Activated naive CD4-positive, alpha-beta T cell treated with anti-CD3 and anti-CD28 coated beads for 36 hours (primary cell): ENCODE measurements at regions of chr1 and their contacts with region 1.

Region 1: GRCh38 chr1:26787706-26788514 is at the start of gene PIGV:
- DNase-seq: peak; percentile 87
- H3K4me3 Mint-ChIP-seq: peak within 1 kb of the TSS; percentile 83
- H3K27ac Mint-ChIP-seq: peak within 1 kb of the TSS; percentile 97
- H3K4me1 Mint-ChIP-seq: peaks cover 58% of the 10 kb centered on the region
- H3K27me3 Mint-ChIP-seq: no peaks in the 10 kb centered on the region
- total RNA-seq, gene PIGV: 10.6 to 11.2 TPM

Region 2: GRCh38 chr1:26472901-26473845 is 314.7 kb before region 1 on chr1:
- CTCF ChIA-PET with region 1: no interaction called
- intact Hi-C with region 1: loop called (anchors 1 kb)
- DNase-seq: peak; percentile 96
- H3K4me3 Mint-ChIP-seq: peak overlapping the region; percentile 87
- H3K27ac Mint-ChIP-seq: peak overlapping the region; percentile 71
- H3K4me1 Mint-ChIP-seq: peaks cover 49% of the 10 kb centered on the region
- H3K27me3 Mint-ChIP-seq: no peaks in the 10 kb centered on the region

Region 3: DNA sequence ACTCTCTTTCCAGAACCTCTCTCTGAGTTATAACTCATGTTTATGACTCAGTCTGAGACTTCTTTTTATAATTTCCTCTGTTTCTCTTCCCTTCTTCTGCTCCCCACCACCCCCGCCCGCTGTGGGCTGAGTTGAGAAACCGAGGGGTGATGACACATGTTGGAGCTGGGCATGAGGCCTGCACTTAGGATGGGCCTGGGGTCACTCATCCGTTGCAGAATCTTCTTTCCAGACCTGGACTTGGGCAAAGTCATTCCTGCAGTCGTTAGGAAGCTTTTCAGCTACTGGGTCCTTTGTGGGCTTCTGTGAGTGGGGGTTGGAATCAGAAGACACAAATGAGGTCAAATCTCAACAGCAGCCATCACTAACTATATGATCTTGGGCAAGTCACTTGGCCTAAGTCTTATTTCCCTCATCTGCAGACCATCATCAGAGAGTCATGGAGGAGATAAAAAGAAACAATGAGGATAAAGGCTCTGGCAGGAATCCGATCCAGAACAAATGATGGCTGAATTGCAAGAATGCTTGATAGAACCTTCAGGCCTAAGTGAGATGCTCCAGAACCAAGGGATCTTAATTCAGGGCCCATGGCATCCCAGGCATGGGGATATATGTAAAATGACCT is 205.0 kb before region 1 on chr1:
- CTCF ChIA-PET with region 1: interaction called, 9 read pairs
- intact Hi-C with region 1: loop called (anchors 1 kb)
- DNase-seq: peak; percentile 90
- H3K4me3 Mint-ChIP-seq: no peak overlapping the region
- H3K27ac Mint-ChIP-seq: peak overlapping the region; percentile 72
- H3K4me1 Mint-ChIP-seq: peaks cover 51% of the 10 kb centered on the region
- H3K27me3 Mint-ChIP-seq: no peaks in the 10 kb centered on the region

Region 4: GRCh38 chr1:26677306-26678115 is 110.4 kb before region 1 on chr1:
- CTCF ChIA-PET with region 1: interaction called, 35 read pairs
- intact Hi-C with region 1: loop called (anchors 1 kb)
- DNase-seq: peak; percentile 84
- H3K4me3 Mint-ChIP-seq: no peak overlapping the region
- H3K27ac Mint-ChIP-seq: peak overlapping the region; percentile 21
- H3K4me1 Mint-ChIP-seq: peaks cover 16% of the 10 kb centered on the region
- H3K27me3 Mint-ChIP-seq: no peaks in the 10 kb centered on the region

Region 5: GRCh38 chr1:26728645-26729044 is 59.3 kb before region 1 on chr1:
- CTCF ChIA-PET with region 1: interaction called, 16 read pairs
- intact Hi-C with region 1: loop called (anchors 2 kb)
- DNase-seq: no peak
- H3K4me3 Mint-ChIP-seq: no peak overlapping the region
- H3K27ac Mint-ChIP-seq: no peak overlapping the region
- H3K4me1 Mint-ChIP-seq: peaks cover 93% of the 10 kb centered on the region
- H3K27me3 Mint-ChIP-seq: no peaks in the 10 kb centered on the region

Region 6: DNA sequence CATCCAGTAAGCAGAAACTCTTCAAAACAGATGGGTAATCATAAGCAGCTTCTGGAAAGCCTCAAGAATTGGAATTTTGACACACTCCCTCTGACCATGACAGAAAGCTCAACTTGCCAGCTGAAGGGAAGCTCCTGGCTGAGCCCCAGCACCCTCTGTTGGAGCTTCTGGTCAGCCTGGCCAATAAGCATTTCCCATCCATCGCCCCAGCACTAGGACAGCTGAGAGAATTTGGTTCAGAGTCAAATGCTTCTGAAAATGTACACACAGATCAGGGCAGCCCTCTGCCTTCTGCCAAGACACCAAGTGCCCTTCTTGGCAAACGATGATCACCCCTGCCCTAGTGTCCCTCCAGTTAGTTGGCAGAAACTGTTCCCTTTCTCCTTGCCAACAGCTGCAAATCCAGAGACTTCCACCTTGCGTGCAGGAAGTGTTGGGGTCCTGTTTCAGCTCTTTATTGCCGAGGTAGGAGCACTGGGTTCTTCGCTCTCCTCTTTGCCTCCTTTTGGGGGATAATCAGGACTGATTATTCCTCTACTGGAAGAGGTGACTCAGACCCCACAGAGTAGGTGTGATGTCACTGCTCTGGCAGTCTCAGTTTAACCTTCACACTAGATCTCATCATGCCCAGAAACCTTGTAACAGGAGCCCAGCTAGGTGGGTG is 11.7 kb after region 1 on chr1:
- CTCF ChIA-PET with region 1: interaction called, 37 read pairs
- intact Hi-C with region 1: loop called (anchors 1 kb)
- DNase-seq: peak; percentile 46
- H3K4me3 Mint-ChIP-seq: no peak overlapping the region
- H3K27ac Mint-ChIP-seq: peak overlapping the region; percentile 64
- H3K4me1 Mint-ChIP-seq: peaks cover 33% of the 10 kb centered on the region
- H3K27me3 Mint-ChIP-seq: no peaks in the 10 kb centered on the region

Region 7: DNA sequence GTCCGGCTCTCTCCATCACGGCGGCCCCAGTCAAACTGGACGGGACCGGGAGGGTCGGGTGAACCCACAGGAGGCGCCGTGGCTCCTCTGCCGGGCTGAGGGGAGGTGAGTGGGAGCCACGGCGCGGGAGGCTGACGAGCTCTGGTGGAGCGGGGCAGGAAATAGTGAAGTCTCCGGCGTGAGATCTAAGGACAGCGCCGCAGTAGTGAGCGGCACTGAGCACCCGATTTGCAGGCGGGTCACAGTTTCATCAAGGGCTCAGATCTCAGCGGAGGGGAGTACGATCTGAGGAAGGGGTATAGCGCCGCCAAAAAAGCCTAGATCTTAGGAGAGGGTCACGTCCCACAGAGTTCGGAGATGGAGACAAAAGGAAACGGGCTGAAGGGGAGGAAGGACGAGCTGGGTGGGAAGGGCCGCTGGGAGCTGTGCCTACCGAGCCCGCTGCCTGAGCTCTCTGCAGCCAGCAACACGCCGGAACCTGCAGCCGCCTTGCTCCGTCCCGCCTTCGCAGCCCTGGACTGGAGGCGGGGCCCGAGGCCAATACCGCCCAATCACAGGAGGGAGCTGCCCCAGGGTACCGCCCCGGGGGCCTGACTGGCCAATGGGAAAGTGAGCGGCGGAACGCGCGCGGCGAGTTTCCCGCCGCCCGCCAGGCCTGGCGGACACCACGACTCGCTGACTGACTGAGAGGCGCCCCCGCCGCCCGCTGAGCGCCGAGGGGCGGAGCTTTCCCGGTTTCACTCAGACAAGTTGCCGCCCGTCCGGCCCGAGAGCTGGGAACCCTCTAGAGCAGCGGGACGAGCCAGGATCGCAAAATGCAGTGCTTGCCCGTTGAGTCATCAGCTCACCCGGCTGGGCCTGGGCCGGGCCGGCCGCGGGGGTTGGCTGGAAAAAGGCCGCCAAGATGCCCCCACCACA is 77.0 kb after region 1 on chr1:
- CTCF ChIA-PET with region 1: interaction called, 3 read pairs
- intact Hi-C with region 1: loop called (anchors 1 kb)
- DNase-seq: peak; percentile 95
- H3K4me3 Mint-ChIP-seq: peak overlapping the region; percentile 92
- H3K27ac Mint-ChIP-seq: peak overlapping the region; percentile 90
- H3K4me1 Mint-ChIP-seq: peaks cover 21% of the 10 kb centered on the region
- H3K27me3 Mint-ChIP-seq: no peaks in the 10 kb centered on the region